Pancreas (tissue), 10 donors: ENCODE measurements at regions of chr4 and their contacts with region 1.

Region 1: DNA sequence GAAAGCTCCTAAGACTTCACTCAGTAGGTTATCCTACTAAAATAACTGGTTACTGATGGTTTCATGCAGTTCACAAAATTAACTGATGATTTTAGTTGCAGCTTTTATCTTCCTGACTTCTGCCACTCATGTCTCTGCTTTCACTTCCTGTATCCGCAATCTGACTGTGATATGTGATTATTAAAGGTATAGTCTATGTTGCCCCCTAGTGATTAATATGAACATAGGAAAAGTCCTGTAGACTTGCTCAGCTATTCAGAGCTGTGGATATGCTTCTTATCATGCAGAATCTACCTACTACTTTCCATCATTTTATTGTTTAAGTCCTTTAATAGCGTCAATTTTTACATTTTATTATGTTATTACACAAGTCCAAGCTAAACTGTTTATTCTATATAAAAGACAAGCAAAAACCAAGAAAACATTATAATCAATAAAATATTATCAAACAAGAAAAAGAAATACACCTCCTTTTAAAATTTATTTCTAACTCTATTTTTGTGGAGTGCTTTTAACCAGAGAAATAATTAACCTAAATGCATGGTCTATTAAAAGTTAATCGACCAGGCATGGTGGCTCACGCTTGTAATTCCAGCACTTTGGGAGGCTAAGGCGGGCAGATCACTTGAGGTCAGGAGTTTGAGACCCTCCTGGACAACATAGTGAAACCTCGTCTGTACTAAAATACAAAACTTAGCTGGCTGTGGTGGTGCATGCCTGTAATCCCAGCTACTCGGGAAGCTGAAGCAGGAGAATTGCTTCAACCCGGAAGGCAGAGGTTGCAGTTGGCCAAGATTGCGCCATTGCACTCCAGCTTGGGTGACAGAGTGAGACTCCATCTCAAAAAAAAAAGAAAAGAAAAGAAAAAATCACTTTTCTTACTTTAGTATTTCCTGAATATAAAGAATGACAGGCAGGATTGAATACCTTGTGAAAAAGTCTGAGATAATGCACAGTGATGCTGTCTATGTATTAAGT is 40.4 kb upstream of the TLR2 start:
- DNase-seq: no peak
- ATAC-seq: peak; percentile 88 to 96 (median 89)
- H3K4me3 ChIP-seq: no peak overlapping the region
- H3K27ac ChIP-seq: no peak overlapping the region
- H3K4me1 ChIP-seq: no peaks in the 10 kb centered on the region
- H3K27me3 ChIP-seq: no peaks in the 10 kb centered on the region
- CTCF ChIP-seq: peak in 1 of 4 donors; percentile 24

Region 2: DNA sequence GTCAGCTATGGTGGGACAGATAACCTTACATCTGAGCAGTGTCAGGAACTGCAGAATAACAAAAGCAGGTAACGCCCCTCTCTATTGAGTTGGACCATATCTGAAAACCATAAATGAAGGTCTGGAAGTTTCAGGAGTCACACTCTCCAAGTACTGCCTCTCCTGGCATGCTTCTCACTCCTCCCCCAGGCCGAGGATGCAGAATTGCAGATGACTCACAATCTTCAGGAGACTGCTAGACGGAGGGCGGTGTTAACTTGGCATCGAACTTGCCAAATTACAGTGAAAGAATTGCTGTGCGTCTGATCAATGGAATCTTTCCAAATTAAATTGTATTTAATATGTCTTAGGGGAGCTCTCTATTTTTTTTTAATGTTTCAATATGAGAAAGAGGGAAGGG is 506.5 kb before region 1 on chr4:
- intact Hi-C with region 1: loop called in 1 of 3 experiments (anchors 10 kb)
- DNase-seq: no peak
- ATAC-seq: peak in 3 of 4 donors; percentile 40 to 60 (median 55)
- H3K4me3 ChIP-seq: no peak overlapping the region
- H3K27ac ChIP-seq: no peak overlapping the region
- H3K4me1 ChIP-seq: no peaks in the 10 kb centered on the region
- H3K27me3 ChIP-seq: no peaks in the 10 kb centered on the region
- CTCF ChIP-seq: no peak

Region 3: GRCh38 chr4:153809307-153809706 is 165.6 kb after region 1 on chr4:
- intact Hi-C with region 1: no loop called
- DNase-seq: no peak
- ATAC-seq: no peak
- H3K4me3 ChIP-seq: no peak overlapping the region
- H3K27ac ChIP-seq: no peak overlapping the region
- H3K4me1 ChIP-seq: no peaks in the 10 kb centered on the region
- H3K27me3 ChIP-seq: no peaks in the 10 kb centered on the region
- CTCF ChIP-seq: no peak